PC-9 (cell line): ENCODE measurements at regions of chr9 and their contacts with region 1.

Region 1: DNA sequence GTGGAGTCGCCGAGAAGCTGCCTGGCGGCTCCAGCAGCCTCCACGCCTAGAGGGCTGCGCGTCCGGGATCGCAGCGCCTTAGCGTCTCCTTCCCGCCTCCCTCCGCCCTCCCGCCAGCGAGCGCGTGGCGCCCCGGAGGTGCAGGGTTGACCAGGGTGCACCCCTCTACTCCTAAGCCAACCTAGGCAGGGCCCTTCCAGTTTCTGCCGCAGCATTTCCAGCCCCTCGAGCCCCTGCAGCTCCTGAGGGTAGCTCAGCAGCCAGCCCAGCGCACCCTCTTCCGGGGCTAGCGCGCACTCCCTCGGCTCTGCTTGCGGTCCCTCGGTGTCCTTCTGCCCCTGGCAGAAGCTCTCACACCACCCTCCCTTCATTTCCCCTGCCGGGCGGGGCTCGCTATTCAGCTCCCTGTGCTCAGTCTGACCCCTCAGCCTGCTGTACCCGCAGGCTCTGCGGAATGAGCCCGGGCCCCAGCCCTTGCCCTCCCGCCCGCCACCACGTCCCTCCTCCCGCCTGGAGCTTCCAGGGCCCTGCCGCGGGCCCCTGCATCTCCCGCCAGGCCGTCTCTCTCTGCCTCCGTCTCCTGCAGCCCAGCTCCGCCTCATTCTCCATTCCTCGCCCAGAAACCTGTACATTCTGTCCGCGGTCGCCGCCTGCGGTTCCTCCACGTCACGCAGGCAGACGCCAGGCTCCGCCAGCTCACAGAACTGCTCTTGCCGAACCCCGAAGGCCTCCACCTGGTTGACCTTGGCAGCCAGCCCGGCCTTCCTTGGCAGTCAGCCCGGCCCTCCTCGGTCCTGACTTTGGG is 61.8 kb downstream of the SPATA31C2 start:
- DNase-seq: peak; percentile 76 to 96
- H3K4me3 ChIP-seq: peak overlapping the region; percentile 64
- H3K27ac ChIP-seq: peak overlapping the region; percentile 39; the same call in 1 of the 2 replicates
- H3K4me1 ChIP-seq: peaks cover 13% of the 10 kb centered on the region
- H3K27me3 ChIP-seq: no peaks in the 10 kb centered on the region
- CTCF ChIP-seq: no peak; the same call in 1 of the 2 replicates

Region 2: DNA sequence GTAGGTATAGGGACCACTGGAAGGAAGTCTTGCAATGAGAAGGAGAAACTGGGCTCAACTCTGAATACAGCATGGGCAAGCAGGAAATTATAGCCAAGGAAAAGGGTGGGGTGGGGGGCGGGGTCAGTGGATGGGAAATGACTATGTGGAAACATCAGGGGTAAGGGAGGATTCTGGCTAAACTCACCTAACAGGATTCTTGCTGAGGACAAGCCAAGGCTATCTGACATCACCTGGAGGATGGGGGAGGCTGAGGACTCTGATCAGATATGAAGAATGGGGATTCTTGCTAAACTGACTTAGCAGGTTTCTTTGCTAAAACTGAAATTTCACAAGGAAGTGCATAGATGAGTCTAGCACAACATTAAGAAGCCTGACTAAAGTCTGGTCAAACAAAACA is 309.8 kb before region 1 on chr9:
- CTCF ChIA-PET with region 1: no interaction called
- POLR2A ChIA-PET with region 1: no interaction called
- intact Hi-C with region 1: no loop called
- DNase-seq: peak; percentile 83 to 99
- H3K4me3 ChIP-seq: peak overlapping the region; percentile 42; the same call in 1 of the 2 replicates
- H3K27ac ChIP-seq: peak overlapping the region; percentile 91
- H3K4me1 ChIP-seq: peaks cover 27% of the 10 kb centered on the region
- H3K27me3 ChIP-seq: no peaks in the 10 kb centered on the region
- CTCF ChIP-seq: no peak

Region 3: DNA sequence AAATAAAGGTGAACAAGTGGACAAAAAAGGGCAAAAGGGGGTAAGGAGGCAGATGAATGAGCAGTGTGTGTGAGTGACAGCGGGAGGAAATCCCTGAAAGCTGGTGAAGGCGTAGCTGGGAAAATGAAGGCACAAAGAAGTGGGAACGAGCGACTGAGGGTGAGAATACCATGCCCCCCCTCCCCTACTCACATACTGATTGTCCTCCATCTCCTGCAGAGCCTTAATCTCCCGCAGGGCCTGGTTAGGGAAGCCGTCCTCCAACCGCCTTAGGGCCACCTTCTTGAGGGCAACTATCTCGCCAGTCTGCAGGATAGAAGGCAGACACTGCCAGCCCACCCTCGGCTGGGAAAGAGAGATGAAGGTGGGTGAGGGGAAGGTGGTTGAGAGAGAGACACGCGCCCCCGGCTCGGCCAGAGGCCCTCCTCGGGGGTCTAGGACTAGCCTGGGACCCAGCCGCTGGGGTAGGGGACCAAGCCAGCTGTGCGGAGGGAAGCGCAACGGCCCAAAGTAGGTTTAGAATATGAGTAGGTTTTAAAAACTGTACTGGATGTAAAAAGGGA is 102.7 kb before region 1 on chr9:
- CTCF ChIA-PET with region 1: interaction called, 4 read pairs
- POLR2A ChIA-PET with region 1: no interaction called
- intact Hi-C with region 1: loop called (anchors 10 kb)
- DNase-seq: no peak
- H3K4me3 ChIP-seq: peak overlapping the region; percentile 86
- H3K27ac ChIP-seq: no peak overlapping the region
- H3K4me1 ChIP-seq: peaks cover 11% of the 10 kb centered on the region; the same call in 1 of the 2 replicates
- H3K27me3 ChIP-seq: no peaks in the 10 kb centered on the region
- CTCF ChIP-seq: no peak

Region 4: DNA sequence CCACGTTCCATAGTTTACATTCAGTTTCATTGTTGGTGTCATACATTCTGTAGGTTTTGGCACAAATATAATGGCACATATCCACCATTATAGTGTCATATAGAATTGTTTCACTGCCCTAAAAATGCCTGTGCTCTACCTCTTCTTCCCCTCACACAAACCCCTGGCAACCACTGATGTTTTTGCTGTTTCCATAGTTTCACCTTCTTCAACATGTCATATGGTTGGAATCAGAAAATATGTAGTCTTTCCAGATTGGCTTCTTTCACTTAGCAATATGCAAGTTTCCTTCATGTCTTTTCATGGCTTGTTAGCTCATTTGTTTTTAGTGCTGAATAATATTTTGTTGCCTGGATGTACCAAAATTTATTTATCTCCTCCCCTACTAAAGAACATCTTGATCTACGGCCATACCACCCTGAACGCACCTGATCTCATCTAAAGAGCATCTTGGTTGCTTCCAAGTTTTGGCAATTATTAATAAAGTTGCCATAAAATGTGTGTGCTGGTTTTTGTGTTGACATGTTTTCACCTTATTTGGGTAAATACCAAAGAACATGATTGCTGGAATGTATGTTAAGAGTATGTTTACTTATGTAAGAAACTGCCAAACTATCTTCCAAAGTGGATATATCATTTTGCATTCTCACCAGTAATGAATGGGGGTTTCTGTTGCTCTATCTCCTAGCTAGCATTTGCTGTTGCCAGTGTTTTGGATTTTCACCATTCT is 85.2 kb before region 1 on chr9:
- CTCF ChIA-PET with region 1: no interaction called
- POLR2A ChIA-PET with region 1: no interaction called
- intact Hi-C with region 1: loop called (anchors 5 kb)
- DNase-seq: peak in 1 of 2 experiments; percentile 56
- H3K4me3 ChIP-seq: no peak overlapping the region
- H3K27ac ChIP-seq: no peak overlapping the region
- H3K4me1 ChIP-seq: no peaks in the 10 kb centered on the region
- H3K27me3 ChIP-seq: no peaks in the 10 kb centered on the region
- CTCF ChIP-seq: no peak

Region 5: GRCh38 chr9:89988458-89988857 is 1912.0 kb after region 1 on chr9:
- CTCF ChIA-PET with region 1: interaction called, 15 read pairs
- POLR2A ChIA-PET with region 1: no interaction called
- intact Hi-C with region 1: no loop called
- DNase-seq: no peak
- H3K4me3 ChIP-seq: no peak overlapping the region
- H3K27ac ChIP-seq: no peak overlapping the region
- H3K4me1 ChIP-seq: no peaks in the 10 kb centered on the region
- H3K27me3 ChIP-seq: peaks cover 66% of the 10 kb centered on the region
- CTCF ChIP-seq: no peak